ENCODE measurements at regions of chr7 and their contacts with region 1.

Region 1: GRCh38 chr7:37495574-37496184 is 47.0 kb upstream of the ELMO1 start:
- DNase-seq: no peak
- ATAC-seq: no peak
- H3K4me3 Mint-ChIP-seq: no peak overlapping the region
- H3K27ac Mint-ChIP-seq: no peak overlapping the region
- H3K4me1 Mint-ChIP-seq: peaks cover 8% of the 10 kb centered on the region
- H3K27me3 Mint-ChIP-seq: no peaks in the 10 kb centered on the region

Region 2: GRCh38 chr7:37201003-37201875 is 294.4 kb before region 1 on chr7:
- CTCF ChIA-PET with region 1: interaction called, 6 read pairs
- POLR2A ChIA-PET with region 1: no interaction called
- intact Hi-C with region 1: loop called in 1 of 2 experiments (anchors 10 kb)
- DNase-seq: peak; percentile 73
- ATAC-seq: no peak
- H3K4me3 Mint-ChIP-seq: no peak overlapping the region
- H3K27ac Mint-ChIP-seq: no peak overlapping the region
- H3K4me1 Mint-ChIP-seq: peaks cover 7% of the 10 kb centered on the region
- H3K27me3 Mint-ChIP-seq: no peaks in the 10 kb centered on the region

Measured in activated CD4-positive, alpha-beta T cell treated with anti-CD3 and anti-CD28 coated beads for 36 hours (primary cell).